ENCODE measurements at regions of chr1 and their contacts with region 1.

Region 1: DNA sequence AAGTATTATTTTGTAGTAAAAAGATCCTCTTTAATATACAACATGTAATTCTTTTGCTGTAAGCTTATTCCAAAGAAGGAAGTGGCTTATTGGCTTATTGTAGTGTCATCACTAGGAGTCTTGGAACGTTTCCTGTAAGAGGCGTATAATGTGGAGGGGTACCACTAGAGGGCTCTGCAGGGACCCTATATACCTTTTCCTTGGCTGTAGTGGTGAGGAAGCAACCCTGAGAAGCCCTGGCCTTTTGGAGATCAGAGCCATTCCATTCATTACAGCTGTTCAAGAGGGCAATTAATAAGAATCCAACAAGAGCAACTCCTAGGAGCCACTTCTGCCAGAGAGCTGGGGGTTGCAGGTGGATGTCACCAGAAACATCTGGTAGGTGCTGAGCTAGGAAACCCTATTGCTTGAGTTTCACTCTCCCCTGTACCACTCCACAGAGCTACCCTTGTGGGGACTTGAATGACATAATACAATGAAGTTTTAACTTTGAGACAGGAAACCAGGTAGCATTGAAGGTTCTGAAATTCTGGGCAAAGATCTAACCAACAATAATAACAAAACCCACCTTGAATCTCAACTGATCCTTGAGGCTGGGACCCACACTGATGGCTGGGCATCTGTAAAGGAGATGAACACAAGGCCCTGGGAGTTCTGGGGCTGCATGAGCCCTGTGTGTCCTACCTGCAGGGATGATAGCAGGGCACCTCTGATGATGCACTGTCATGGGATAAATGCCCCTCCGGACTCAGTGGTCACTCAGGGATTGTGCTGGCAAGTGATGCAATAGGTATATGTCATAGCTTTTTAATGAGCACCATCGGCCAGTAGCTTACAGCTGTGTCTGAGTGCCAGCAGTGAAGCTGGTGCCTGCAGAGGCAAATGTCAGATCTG is 160.2 kb upstream of the COA6 start:
- DNase-seq: peak; percentile 77
- H3K4me3 ChIP-seq: no peak overlapping the region
- H3K27ac ChIP-seq: no peak overlapping the region
- H3K4me1 ChIP-seq: peaks cover 0 to 5% of the 10 kb centered on the region in 2 experiments; a peak in 1 of 4 replicates
- H3K27me3 ChIP-seq: no peaks in the 10 kb centered on the region
- CTCF ChIP-seq: peak; percentile 62
- EP300 ChIP-seq: no peak
- RAD21 ChIP-seq: peak; percentile 72

Region 2: GRCh38 chr1:234170622-234171021 is 42.4 kb before region 1 on chr1:
- CTCF ChIA-PET with region 1: interaction called, 13 read pairs
- POLR2A ChIA-PET with region 1: no interaction called
- DNase-seq: no peak
- H3K4me3 ChIP-seq: no peak overlapping the region
- H3K27ac ChIP-seq: no peak overlapping the region
- H3K4me1 ChIP-seq: no peaks in the 10 kb centered on the region
- H3K27me3 ChIP-seq: no peaks in the 10 kb centered on the region; the same call in 1 of the 2 replicates
- CTCF ChIP-seq: no peak
- EP300 ChIP-seq: no peak
- RAD21 ChIP-seq: no peak

Region 3: GRCh38 chr1:234188454-234188792 is 24.6 kb before region 1 on chr1:
- CTCF ChIA-PET with region 1: interaction called, 24 read pairs
- POLR2A ChIA-PET with region 1: interaction called, 3 read pairs
- DNase-seq: no peak
- H3K4me3 ChIP-seq: no peak overlapping the region; a peak in 1 of 4 replicates
- H3K27ac ChIP-seq: no peak overlapping the region
- H3K4me1 ChIP-seq: no peaks in the 10 kb centered on the region
- H3K27me3 ChIP-seq: no peaks in the 10 kb centered on the region
- CTCF ChIP-seq: peak; percentile 27; the same call in 1 of the 2 replicates
- EP300 ChIP-seq: no peak
- RAD21 ChIP-seq: no peak

Region 4: DNA sequence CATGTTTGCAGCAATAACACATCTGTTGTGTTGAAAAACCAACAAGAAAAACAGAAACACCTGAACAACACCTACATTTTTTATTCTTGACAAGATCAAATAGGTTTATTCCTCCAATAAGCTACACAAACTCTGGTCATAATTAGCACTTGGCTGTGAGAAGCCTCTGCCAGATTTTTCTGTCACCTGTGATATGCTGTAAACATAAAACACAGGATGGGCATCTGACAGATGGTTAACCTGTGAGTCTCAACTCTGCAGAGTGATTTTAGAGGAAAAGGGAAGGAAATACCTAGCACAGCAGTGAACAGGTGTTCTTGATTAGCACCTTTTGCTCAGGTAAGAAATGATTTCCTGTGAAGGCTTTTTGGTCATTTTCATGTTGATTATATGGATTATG is 15.2 kb before region 1 on chr1:
- CTCF ChIA-PET with region 1: interaction called, 14 read pairs
- POLR2A ChIA-PET with region 1: no interaction called
- DNase-seq: no peak
- H3K4me3 ChIP-seq: no peak overlapping the region
- H3K27ac ChIP-seq: no peak overlapping the region
- H3K4me1 ChIP-seq: no peaks in the 10 kb centered on the region
- H3K27me3 ChIP-seq: no peaks in the 10 kb centered on the region; the same call in 1 of the 2 replicates
- CTCF ChIP-seq: no peak
- EP300 ChIP-seq: no peak
- RAD21 ChIP-seq: no peak

Region 5: DNA sequence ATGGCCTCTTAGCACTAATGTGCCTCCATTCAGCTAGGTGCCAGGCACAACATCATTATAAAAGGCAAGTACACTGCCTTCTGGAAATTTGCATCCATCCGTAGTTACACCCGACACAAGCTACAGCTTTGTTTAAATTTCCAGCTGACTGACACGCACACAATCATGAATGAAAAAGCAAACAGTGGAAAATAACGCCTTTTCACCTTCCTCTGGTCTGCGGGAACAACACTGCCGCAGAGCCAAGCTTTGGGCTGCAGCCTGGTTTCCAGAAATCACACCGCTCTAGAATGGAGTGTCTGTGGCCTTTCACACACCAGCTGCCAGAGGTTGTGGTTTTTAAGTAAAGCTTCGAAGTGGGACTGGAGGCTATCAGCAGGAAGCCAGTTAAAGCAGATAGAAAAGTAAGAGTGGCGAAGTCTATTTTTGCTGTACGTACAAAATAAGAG is 17.4 kb after region 1 on chr1:
- CTCF ChIA-PET with region 1: interaction called, 18 read pairs
- POLR2A ChIA-PET with region 1: no interaction called
- DNase-seq: no peak
- H3K4me3 ChIP-seq: no peak overlapping the region
- H3K27ac ChIP-seq: no peak overlapping the region
- H3K4me1 ChIP-seq: peaks cover 0 to 17% of the 10 kb centered on the region in 2 experiments; a peak in 3 of 4 replicates
- H3K27me3 ChIP-seq: no peaks in the 10 kb centered on the region
- CTCF ChIP-seq: no peak
- EP300 ChIP-seq: no peak
- RAD21 ChIP-seq: no peak

Region 6: DNA sequence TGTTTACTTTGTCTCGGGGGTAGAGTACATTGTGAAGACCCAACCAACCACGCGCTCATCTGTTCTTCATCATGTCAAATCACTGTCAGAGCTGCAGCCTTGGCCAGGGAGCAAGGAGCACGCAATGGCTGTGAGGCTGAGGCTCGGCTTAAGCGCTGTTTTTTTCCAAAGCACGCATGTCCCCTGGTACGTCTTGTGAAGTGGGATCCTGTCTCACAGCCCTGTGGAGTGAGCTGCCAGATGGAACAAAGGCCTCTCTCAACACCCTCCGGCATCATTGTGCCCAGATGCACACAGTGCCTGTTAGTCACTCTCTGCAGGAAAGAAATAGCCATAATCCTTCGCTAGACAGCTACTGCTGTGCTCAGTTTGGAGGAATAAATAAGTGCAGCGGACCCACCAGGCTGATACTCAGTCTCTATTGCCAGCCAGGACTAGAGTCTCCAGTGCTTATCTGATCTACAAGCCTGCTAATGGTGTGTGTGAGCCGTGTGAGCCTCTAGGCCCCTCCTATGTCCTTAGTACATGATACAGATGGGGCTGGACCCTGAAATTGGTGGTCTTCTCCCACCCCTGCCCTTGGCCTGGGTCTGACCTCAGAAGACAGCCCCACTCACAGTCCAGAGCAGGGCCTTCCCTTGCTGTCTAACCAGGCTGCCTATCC is 68.9 kb after region 1 on chr1:
- CTCF ChIA-PET with region 1: interaction called, 30 read pairs
- POLR2A ChIA-PET with region 1: no interaction called
- DNase-seq: peak; percentile 74
- H3K4me3 ChIP-seq: no peak overlapping the region
- H3K27ac ChIP-seq: peak overlapping the region in 1 of 2 experiments; percentile 86; a peak in 2 of 4 replicates
- H3K4me1 ChIP-seq: peaks cover 0 to 20% of the 10 kb centered on the region in 2 experiments; a peak in 2 of 4 replicates
- H3K27me3 ChIP-seq: no peaks in the 10 kb centered on the region
- CTCF ChIP-seq: no peak
- EP300 ChIP-seq: peak in 1 of 2 experiments; percentile 49; a peak in 1 of 4 replicates
- RAD21 ChIP-seq: peak; percentile 33

Region 7: GRCh38 chr1:234326497-234327366 is 113.7 kb after region 1 on chr1:
- CTCF ChIA-PET with region 1: interaction called, 26 read pairs
- POLR2A ChIA-PET with region 1: no interaction called
- DNase-seq: peak; percentile 72
- H3K4me3 ChIP-seq: no peak overlapping the region; a peak in 1 of 4 replicates
- H3K27ac ChIP-seq: no peak overlapping the region
- H3K4me1 ChIP-seq: peaks cover 0 to 7% of the 10 kb centered on the region in 2 experiments; a peak in 1 of 4 replicates
- H3K27me3 ChIP-seq: no peaks in the 10 kb centered on the region
- CTCF ChIP-seq: peak; percentile 76
- EP300 ChIP-seq: no peak
- RAD21 ChIP-seq: peak; percentile 69